Mammary epithelial cell (primary cell): ENCODE measurements at regions of chr18 and their contacts with region 1.

Region 1: GRCh38 chr18:56373601-56374000 is 264.8 kb downstream of the TXNL1 start:
- DNase-seq: peak; percentile 20
- H3K4me3 ChIP-seq: no peak overlapping the region
- H3K27ac ChIP-seq: no peak overlapping the region
- H3K4me1 ChIP-seq: peaks cover 4% of the 10 kb centered on the region
- H3K27me3 ChIP-seq: no peaks in the 10 kb centered on the region
- CTCF ChIP-seq: no peak

Region 2: GRCh38 chr18:55775972-55776371 is 597.6 kb before region 1 on chr18:
- CTCF ChIA-PET with region 1: no interaction called
- dilution Hi-C with region 1: no loop called
- in situ Hi-C with region 1: no loop called
- intact Hi-C with region 1: no loop called
- DNase-seq: no peak
- H3K4me3 ChIP-seq: no peak overlapping the region
- H3K27ac ChIP-seq: no peak overlapping the region
- H3K4me1 ChIP-seq: peaks cover 14% of the 10 kb centered on the region
- H3K27me3 ChIP-seq: no peaks in the 10 kb centered on the region
- CTCF ChIP-seq: no peak

Region 3: DNA sequence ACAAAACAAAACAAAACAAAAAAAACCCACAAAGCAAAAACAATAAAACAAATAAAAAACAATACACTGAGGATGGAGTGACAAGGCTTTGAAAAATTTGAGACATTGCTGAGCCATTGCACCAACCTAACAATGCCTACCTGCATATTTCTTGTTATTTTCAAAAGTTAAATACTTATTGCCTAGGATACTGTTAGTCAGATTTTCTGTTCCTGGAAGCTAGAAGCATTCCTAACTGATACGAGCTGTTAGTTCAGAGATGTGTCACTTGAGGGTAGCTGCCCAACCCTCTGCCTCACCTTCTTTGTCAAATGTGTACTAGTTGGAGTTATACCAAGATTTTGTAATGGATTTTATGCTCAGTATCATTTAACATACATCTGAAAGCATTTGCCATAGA is 77.6 kb after region 1 on chr18:
- CTCF ChIA-PET with region 1: interaction called, 10 read pairs
- dilution Hi-C with region 1: no loop called
- in situ Hi-C with region 1: no loop called
- intact Hi-C with region 1: no loop called
- DNase-seq: peak; percentile 62
- H3K4me3 ChIP-seq: no peak overlapping the region
- H3K27ac ChIP-seq: no peak overlapping the region
- H3K4me1 ChIP-seq: no peaks in the 10 kb centered on the region
- H3K27me3 ChIP-seq: peaks cover 1% of the 10 kb centered on the region
- CTCF ChIP-seq: no peak

Region 4: GRCh38 chr18:57051657-57052044 is 678.0 kb after region 1 on chr18:
- CTCF ChIA-PET with region 1: no interaction called
- dilution Hi-C with region 1: no loop called
- in situ Hi-C with region 1: no loop called
- intact Hi-C with region 1: no loop called
- DNase-seq: no peak
- H3K4me3 ChIP-seq: no peak overlapping the region
- H3K27ac ChIP-seq: no peak overlapping the region
- H3K4me1 ChIP-seq: no peaks in the 10 kb centered on the region
- H3K27me3 ChIP-seq: no peaks in the 10 kb centered on the region
- CTCF ChIP-seq: no peak